Activated T-helper 1 cell treated with anti-CD3 and anti-CD28 coated beads, Interleukin-12 subunit alpha, Interleukin-12 subunit beta, Interleukin-2, Interleukin-4 antibody, amounts not matched to agents 30 ng/mL and 10 ng/mL and 1 ng/mL, durations not matched to agents 14 hours and 24 hours and 36 hours (primary cell): ENCODE measurements at regions of chr2 and their contacts with region 1.

Region 1: DNA sequence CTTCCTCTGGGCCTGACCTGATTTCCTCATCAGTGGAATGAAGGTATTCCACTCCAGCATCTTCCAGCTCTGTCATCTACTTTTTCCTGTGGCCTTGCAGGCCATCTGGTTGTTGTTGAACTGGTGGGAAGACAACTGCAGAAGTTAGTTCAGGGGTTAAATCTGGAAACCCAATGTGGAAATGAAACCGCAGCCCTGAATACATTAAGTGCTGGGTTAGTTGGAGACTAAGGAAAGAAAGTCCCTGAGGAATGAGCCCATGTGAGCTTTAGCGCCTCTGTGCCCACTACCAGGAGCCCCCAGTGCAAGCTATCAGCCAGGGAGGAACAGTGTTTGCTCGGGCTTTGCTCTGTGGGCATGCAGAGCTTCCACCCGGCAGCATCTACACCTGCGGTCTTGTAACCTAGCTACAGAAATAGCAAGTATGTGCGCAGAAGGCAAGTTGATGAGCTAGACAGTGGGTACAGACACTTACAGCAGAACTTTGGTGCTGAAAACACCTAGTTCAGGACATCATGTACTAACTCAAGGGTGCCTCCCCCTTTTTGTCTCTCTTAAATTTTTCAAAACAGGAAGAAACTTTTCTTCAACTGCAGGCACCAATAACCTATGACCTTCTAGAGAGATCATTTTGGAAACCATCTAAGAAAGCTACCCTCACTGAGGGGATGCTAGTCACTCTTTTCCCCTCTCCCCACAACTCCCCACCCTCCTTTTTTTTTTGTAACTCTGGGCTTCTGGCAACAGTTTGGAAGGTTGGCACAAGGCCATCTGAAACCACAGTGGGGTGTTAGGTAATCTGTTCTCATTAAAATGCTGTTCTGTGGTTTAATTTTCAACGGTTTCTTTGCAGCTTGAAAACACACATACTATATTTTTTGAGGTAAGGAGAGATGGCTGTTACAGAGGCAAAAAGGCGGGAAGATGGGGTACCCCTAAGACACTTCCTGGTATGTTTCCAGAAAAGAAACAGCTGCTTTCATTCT is 18.3 kb upstream of the CXCR4 start:
- DNase-seq: peak; percentile 59
- H3K4me3 Mint-ChIP-seq: peak overlapping the region; percentile 17
- H3K27ac Mint-ChIP-seq: peak overlapping the region; percentile 60
- H3K4me1 Mint-ChIP-seq: peaks cover 82% of the 10 kb centered on the region
- H3K27me3 Mint-ChIP-seq: peaks cover 30% of the 10 kb centered on the region

Region 2: GRCh38 chr2:135741395-135742324 is 394.6 kb before region 1 on chr2 and contains the start of gene UBXN4:
- intact Hi-C with region 1: loop called (anchors 5 kb)
- DNase-seq: peak; percentile 89
- H3K4me3 Mint-ChIP-seq: peak within 1 kb of the TSS; percentile 99
- H3K27ac Mint-ChIP-seq: peak within 1 kb of the TSS; percentile 100
- H3K4me1 Mint-ChIP-seq: peaks cover 36% of the 10 kb centered on the region
- H3K27me3 Mint-ChIP-seq: no peaks in the 10 kb centered on the region
- total RNA-seq, gene UBXN4: 115 and 121 TPM in 2 replicates

Region 3: DNA sequence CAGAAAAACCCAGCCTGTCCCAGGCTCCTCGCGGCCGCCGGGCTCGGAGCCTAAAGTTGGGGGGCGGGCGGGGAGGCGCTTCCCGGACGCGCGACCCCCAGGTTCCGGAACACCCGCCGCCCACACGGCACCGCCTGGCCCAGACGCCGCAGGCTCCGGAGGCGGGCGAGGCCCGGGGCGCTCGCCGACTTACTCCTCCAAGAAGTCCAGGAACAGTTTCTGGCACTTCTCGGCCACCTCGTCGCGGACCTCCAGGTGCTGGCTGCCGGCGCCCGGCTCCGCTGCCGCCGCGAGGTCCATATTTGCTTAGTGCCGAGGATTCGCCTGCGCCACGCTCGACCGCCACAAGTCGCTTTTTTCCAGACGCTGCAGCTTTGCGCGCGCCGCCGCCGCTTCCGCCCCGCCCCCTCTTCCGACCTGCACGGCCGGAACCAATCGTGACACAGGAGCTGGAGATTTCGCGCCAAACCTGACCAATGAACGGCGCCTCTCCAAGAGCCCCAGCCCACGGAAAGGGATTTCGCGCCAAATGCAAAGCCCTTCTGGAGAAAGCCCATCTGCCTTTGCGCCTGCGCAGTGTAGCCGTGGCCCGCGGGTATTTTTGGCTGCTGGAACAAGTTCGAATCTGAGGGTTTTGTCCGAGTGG is 260.0 kb before region 1 on chr2 and contains the start of gene MCM6:
- intact Hi-C with region 1: loop called (anchors 1 kb)
- DNase-seq: peak; percentile 99
- H3K4me3 Mint-ChIP-seq: peak within 1 kb of the TSS; percentile 98
- H3K27ac Mint-ChIP-seq: peak within 1 kb of the TSS; percentile 99
- H3K4me1 Mint-ChIP-seq: peaks cover 45% of the 10 kb centered on the region
- H3K27me3 Mint-ChIP-seq: peaks cover 2% of the 10 kb centered on the region
- total RNA-seq, gene MCM6: 176 and 177 TPM in 2 replicates

Region 4: DNA sequence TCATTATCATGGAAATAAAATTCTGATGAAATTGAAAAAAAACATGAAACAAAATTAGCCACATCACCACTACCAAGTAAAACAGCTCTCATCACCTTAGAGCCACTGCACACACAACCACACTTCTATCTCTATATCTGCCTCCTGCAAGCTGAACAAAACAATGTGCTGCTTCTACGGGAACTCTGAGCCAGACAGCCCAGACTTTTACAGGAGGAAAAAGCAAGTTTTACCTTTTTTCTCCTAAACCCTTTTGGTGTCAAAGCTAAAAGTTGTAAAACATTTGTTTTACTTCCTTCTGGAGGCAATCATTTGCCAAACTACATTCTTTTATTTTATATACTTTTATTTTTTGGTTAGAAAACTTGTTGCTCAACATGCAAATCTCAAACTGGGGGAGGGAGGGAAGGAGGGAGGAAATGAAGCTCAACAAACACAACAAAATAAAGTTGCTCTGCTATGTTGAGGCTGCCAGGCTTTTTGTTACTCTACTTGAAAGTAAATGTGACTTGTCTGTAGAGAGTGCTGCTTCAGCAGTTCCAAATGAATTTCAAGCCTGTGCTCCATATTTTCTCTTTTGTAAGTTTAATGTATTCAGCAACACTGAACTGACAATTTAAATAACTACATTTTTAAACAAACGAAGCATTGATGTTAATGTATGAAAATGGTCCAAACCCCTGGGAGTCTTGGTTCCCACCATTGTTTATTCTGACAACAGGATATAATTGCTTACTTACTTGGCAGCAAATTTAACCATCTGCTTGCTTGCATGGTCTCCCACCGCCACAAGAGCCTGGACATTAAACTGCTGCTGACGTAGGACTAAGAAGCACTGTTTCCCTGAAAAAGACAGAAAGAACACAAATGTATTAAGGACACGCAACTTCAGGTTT is 175.3 kb before region 1 on chr2:
- intact Hi-C with region 1: loop called (anchors 1 kb)
- DNase-seq: peak; percentile 16
- H3K4me3 Mint-ChIP-seq: peak overlapping the region; percentile 28
- H3K27ac Mint-ChIP-seq: peak overlapping the region; percentile 80
- H3K4me1 Mint-ChIP-seq: peaks cover 55% of the 10 kb centered on the region
- H3K27me3 Mint-ChIP-seq: no peaks in the 10 kb centered on the region

Region 5: DNA sequence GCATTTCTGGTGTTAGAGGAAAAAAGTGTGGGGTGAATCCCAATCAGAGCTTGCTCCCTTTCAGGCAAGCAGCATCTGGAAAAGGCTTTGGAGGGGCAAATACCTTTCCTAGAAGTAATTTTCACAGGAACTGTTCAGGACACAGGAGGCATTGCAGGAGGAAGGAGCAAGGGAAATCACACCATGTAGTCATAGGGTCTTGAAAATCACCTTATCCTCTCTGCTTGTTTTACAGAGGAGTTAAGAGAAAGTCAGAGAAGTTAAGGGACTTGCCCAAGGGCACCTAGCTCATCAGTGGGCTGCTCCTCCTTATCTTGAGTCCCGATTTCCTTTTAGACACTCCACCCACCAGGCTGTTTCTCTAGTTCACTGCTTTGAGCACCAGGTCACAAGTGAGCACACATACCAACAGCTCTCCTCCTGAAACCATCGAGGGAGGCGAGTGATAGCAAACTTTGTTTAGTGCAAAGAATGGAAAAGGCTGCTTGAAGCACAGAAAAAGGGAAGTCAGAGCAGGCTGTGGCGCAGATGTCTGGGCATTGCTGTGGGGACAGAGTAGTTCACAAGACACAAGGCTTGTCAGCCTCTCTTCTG is 70.9 kb after region 1 on chr2:
- intact Hi-C with region 1: loop called (anchors 1 kb)
- DNase-seq: no peak
- H3K4me3 Mint-ChIP-seq: no peak overlapping the region
- H3K27ac Mint-ChIP-seq: peak overlapping the region; percentile 92
- H3K4me1 Mint-ChIP-seq: peaks cover 33% of the 10 kb centered on the region
- H3K27me3 Mint-ChIP-seq: peaks cover 2% of the 10 kb centered on the region

Region 6: GRCh38 chr2:136310797-136311603 is 174.8 kb after region 1 on chr2:
- intact Hi-C with region 1: loop called (anchors 1 kb)
- DNase-seq: no peak
- H3K4me3 Mint-ChIP-seq: peak overlapping the region; percentile 38
- H3K27ac Mint-ChIP-seq: peak overlapping the region; percentile 83
- H3K4me1 Mint-ChIP-seq: peaks cover 38% of the 10 kb centered on the region
- H3K27me3 Mint-ChIP-seq: peaks cover 4% of the 10 kb centered on the region

Region 7: GRCh38 chr2:136378712-136379595 is 242.7 kb after region 1 on chr2:
- intact Hi-C with region 1: loop called (anchors 1 kb)
- DNase-seq: peak; percentile 70
- H3K4me3 Mint-ChIP-seq: no peak overlapping the region
- H3K27ac Mint-ChIP-seq: no peak overlapping the region
- H3K4me1 Mint-ChIP-seq: peaks cover 80% of the 10 kb centered on the region
- H3K27me3 Mint-ChIP-seq: no peaks in the 10 kb centered on the region